ENCODE measurements at regions of chr2 and their contacts with region 1.

Region 1: GRCh38 chr2:54657664-54658083 is 65.8 kb upstream of the EML6 start:
- DNase-seq: peak in 1 of 2 donors; percentile 87
- H3K4me3 ChIP-seq: no peak overlapping the region
- H3K27ac ChIP-seq: peak overlapping the region; percentile 31
- H3K4me1 ChIP-seq: peaks cover 16% of the 10 kb centered on the region
- H3K27me3 ChIP-seq: no peaks in the 10 kb centered on the region
- CTCF ChIP-seq: peak in 2 of 3 experiments; percentile 39 to 47
- POLR2A ChIP-seq: no peak

Region 2: DNA sequence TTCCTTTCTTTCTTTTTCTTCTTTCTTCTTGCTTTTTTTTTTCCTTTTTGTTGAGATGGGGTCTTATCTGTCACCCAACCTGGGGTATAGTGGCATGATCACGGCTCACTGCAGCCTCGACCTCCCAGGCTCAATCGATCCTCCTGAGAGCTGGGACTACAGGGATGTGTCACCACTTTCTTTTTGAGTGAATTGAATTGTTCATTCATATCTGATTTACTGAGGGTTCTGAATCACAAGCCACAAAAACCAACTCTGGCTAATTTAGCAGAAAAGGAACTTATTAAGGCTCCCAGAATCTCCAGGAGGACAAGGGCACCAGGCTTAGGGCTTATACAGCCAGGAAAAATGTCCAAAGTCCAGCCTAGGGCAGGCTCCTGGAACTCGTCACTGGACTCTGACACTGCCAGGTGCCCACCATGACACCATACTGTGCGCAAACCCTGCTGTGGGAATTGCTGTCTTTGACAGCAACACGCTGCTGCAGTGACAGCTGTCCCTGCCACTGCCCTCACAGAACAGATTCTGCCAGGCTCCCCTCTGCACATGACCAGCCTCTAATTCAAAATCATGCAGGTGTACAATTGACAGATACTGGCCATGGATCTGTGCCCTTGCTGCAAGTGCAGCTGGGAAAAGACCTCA is 22.8 kb after region 1 on chr2:
- intact Hi-C with region 1: loop called (anchors 2 kb)
- DNase-seq: no peak
- H3K4me3 ChIP-seq: no peak overlapping the region
- H3K27ac ChIP-seq: no peak overlapping the region
- H3K4me1 ChIP-seq: no peaks in the 10 kb centered on the region
- H3K27me3 ChIP-seq: no peaks in the 10 kb centered on the region
- CTCF ChIP-seq: no peak
- POLR2A ChIP-seq: no peak

Measured in vagina (tissue), 2 donors.